Panc1 (cell line): ENCODE measurements at regions of chr2 and their contacts with region 1.

Region 1: DNA sequence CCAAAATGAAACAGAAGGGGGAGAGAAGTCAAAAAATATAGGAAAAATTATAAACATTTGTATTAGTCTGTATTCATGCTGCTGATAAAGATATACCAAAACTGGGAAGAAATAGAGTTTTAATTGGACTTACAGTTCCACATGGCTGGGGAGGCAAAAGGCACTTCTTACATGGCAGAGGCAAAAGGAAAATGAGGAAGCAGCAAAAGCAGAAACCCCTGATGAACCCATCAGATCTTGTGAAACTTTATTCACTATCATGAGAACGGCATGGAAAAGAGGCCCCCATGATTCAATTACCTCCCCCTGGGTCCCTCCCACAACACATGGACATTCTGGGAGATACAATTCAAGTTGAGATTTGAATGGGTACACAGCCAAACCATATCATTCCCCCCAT is 79.1 kb downstream of the ZRANB3 start:
- DNase-seq: no peak
- ATAC-seq: no peak
- H3K4me3 ChIP-seq: no peak overlapping the region
- H3K27ac ChIP-seq: no peak overlapping the region
- H3K4me1 ChIP-seq: no peaks in the 10 kb centered on the region
- H3K27me3 ChIP-seq: no peaks in the 10 kb centered on the region
- CTCF ChIP-seq: no peak

Region 2: DNA sequence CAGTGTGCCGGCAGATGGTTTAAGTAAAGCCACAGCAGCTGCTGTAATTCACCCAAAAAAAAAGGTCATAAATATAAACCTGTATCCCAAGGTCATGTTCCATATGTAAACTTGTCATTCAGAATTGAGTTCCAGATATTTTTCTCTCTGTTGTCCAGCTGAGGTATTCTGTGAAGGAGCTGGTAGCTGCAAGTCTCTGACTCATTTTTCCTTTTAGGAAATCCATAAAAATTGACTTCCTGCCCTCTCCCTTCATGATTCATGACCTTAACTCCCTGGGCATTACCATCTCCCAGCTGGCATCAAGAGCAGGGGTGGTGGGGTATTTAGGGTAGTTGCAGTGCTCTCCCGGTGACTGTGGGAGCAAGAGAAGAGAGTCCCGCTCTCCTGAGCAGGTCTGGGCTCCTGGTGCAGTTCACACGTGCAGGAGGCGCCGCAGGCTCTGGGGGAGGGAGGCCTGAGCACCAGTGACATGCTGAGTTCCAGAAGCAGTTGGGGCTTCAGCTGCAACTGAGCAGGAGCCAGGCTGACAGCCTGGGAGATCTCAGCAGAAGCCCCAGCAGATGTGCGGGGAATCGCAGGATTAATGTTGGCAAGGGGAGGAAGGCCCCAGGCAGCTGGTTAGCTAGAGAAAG is 1005.5 kb before region 1 on chr2:
- CTCF ChIA-PET with region 1: no interaction called
- POLR2A ChIA-PET with region 1: no interaction called
- in situ Hi-C with region 1: no loop called
- intact Hi-C with region 1: no loop called
- DNase-seq: no peak
- ATAC-seq: no peak
- H3K4me3 ChIP-seq: no peak overlapping the region
- H3K27ac ChIP-seq: no peak overlapping the region
- H3K4me1 ChIP-seq: no peaks in the 10 kb centered on the region
- H3K27me3 ChIP-seq: no peaks in the 10 kb centered on the region
- CTCF ChIP-seq: no peak

Region 3: GRCh38 chr2:135349941-135350340 is 102.0 kb before region 1 on chr2:
- CTCF ChIA-PET with region 1: no interaction called
- POLR2A ChIA-PET with region 1: no interaction called
- in situ Hi-C with region 1: no loop called
- intact Hi-C with region 1: no loop called
- DNase-seq: no peak
- ATAC-seq: no peak
- H3K4me3 ChIP-seq: no peak overlapping the region
- H3K27ac ChIP-seq: no peak overlapping the region
- H3K4me1 ChIP-seq: no peaks in the 10 kb centered on the region
- H3K27me3 ChIP-seq: no peaks in the 10 kb centered on the region
- CTCF ChIP-seq: no peak

Region 4: DNA sequence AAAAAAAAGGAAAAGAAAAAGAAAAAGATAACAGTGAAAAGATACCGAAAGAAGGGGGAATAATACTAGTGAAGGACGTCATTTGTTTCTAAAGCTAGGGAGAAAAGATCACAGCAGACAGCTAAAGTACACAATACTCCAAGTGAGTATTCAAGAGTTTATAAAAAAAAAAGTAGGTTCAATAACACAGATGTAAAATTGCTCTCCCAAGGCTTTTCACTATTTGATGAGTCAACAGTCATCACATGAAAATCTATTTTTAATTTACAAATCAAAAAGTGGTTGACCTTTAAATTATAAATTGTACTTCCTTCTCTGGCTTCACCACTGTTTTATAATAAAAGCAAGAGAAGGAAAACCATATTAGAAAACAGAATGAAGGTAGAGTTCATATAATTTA is 65.0 kb before region 1 on chr2:
- CTCF ChIA-PET with region 1: no interaction called
- POLR2A ChIA-PET with region 1: no interaction called
- in situ Hi-C with region 1: no loop called
- intact Hi-C with region 1: no loop called
- DNase-seq: no peak
- ATAC-seq: no peak
- H3K4me3 ChIP-seq: no peak overlapping the region
- H3K27ac ChIP-seq: no peak overlapping the region
- H3K4me1 ChIP-seq: no peaks in the 10 kb centered on the region
- H3K27me3 ChIP-seq: no peaks in the 10 kb centered on the region
- CTCF ChIP-seq: no peak

Region 5: GRCh38 chr2:135424839-135425238 is 27.1 kb before region 1 on chr2:
- CTCF ChIA-PET with region 1: no interaction called
- POLR2A ChIA-PET with region 1: interaction called, 15 read pairs
- in situ Hi-C with region 1: no loop called
- intact Hi-C with region 1: no loop called
- DNase-seq: no peak
- ATAC-seq: no peak
- H3K4me3 ChIP-seq: no peak overlapping the region
- H3K27ac ChIP-seq: no peak overlapping the region
- H3K4me1 ChIP-seq: no peaks in the 10 kb centered on the region
- H3K27me3 ChIP-seq: no peaks in the 10 kb centered on the region
- CTCF ChIP-seq: peak; percentile 29; the same call in 1 of the 2 replicates